K562 (cell line): ENCODE measurements at regions of chr9 and their contacts with region 1.

Region 1: GRCh38 chr9:128275996-128276573 is at the starts of genes GOLGA2 and SWI5:
- DNase-seq: peak; percentile 100
- ATAC-seq: peak; percentile 95
- H3K4me3 ChIP-seq: peak within 1 kb of the TSS; percentile 85
- H3K27ac ChIP-seq: peak within 1 kb of the TSS; percentile 90
- H3K4me1 ChIP-seq: peaks cover 40 to 53% of the 10 kb centered on the region in 2 experiments
- H3K27me3 ChIP-seq: no peaks in the 10 kb centered on the region
- CTCF ChIP-seq: no peak; a peak in 1 of 6 replicates
- EP300 ChIP-seq: 0 out of 2 replicates have a peak, but pooled peaks have one; percentile 6
- POLR2A ChIP-seq: no peak
- RAD21 ChIP-seq: no peak; a peak in 1 of 4 replicates
- polyA plus RNA-seq, gene GOLGA2: 15.7 to 21.9 TPM
- polyA plus RNA-seq, gene SWI5: 62.8 to 133 TPM

Region 2: DNA sequence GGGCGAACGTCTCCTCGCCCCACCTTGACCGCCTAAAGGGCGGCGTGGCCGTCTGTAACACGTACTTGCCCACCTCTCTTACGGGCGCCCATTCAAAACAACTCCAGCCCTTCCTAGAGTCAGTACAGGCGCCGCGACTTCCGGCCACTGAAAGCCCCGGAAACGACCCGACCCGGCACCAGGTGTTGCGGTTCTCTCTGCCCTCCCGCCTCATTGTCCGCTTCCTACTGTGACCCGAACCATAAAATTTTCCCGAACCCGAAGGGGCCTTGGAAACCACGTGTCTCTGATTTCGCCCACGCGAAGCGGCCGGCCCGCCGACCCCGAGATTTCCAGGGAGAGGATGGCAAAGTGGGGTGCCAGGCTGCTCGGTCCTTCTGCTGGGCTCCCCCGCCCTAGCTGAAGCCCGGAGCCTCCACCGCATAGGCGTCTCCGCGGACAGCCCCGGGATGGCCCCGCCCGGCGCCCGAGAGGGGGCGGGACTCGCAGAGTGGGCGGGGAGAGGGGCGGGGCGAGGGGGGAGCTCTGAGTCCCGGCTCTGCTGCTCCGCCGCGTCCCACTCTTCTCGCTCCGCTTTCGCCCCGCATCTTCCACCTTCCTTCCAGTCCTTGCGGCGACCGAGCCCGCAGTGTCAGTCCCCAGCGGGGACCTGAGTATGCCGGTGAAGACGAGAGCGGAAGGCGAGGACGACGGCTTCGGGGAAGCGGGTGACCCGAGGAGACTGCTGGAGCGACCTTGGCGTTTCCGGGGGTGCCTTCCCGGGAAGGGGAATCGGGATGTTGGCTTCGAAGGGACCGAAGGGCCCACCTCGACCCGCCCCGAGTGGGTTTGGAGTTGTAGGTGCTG is 147.9 kb before region 1 on chr9:
- CTCF ChIA-PET with region 1: no interaction called
- POLR2A ChIA-PET with region 1: no interaction called
- in situ Hi-C with region 1: no loop called
- intact Hi-C with region 1: loop called (anchors 10 kb)
- DNase-seq: peak; percentile 89 to 93 (median 90)
- ATAC-seq: peak; percentile 82
- H3K4me3 ChIP-seq: peak overlapping the region; percentile 98
- H3K27ac ChIP-seq: peak overlapping the region; percentile 93
- H3K4me1 ChIP-seq: peaks cover 10 to 38% of the 10 kb centered on the region in 2 experiments
- H3K27me3 ChIP-seq: no peaks in the 10 kb centered on the region
- CTCF ChIP-seq: no peak
- EP300 ChIP-seq: no peak
- POLR2A ChIP-seq: peak; percentile 71; the same call in 1 of the 2 replicates
- RAD21 ChIP-seq: no peak

Region 3: DNA sequence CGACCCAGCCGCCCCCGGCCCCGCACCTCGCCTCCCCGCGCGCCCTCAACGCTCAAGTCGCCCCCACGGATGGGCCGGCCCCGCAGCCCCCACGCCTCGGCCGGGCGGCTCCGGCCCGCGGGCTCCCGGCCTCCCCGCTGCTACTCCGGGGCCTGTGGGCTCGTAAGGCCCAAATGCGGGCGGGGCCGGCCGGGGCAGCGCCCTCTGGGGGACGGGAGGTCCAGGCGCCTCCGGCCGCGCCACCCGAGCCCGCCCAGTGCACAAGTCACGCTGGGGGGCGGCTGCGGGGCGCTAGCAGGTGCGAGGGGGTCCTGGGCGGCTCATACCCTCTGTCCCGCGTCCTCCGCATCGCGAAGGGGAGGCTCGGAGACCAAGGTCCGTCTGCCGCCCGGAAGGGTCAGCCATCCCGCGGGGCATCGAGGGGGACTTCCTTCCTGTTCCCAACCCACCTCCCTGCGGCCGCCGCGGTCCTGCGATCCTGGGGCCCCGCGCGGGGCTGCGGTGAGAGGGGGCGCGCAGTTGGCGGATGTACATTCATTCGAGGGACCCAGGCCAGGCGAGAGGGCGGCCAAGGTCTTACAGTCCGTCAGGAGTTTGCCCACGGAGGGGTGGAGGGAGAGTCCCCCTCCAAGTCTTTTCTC is 84.6 kb before region 1 on chr9 and contains the start of gene CIZ1:
- CTCF ChIA-PET with region 1: interaction called, 4 read pairs
- POLR2A ChIA-PET with region 1: interaction called, 3 read pairs
- in situ Hi-C with region 1: no loop called
- intact Hi-C with region 1: loop called (anchors 5 kb)
- DNase-seq: peak; percentile 96 to 99 (median 99)
- ATAC-seq: peak; percentile 96
- H3K4me3 ChIP-seq: peak within 1 kb of the TSS; percentile 92
- H3K27ac ChIP-seq: peak within 1 kb of the TSS; percentile 82
- H3K4me1 ChIP-seq: peaks cover 26 to 34% of the 10 kb centered on the region in 2 experiments
- H3K27me3 ChIP-seq: no peaks in the 10 kb centered on the region
- CTCF ChIP-seq: peak; percentile 87 to 97 (median 95)
- EP300 ChIP-seq: peak; percentile 59
- POLR2A ChIP-seq: no peak
- RAD21 ChIP-seq: peak; percentile 35 to 43
- polyA plus RNA-seq, gene CIZ1: 6.6 to 12.6 TPM

Region 4: DNA sequence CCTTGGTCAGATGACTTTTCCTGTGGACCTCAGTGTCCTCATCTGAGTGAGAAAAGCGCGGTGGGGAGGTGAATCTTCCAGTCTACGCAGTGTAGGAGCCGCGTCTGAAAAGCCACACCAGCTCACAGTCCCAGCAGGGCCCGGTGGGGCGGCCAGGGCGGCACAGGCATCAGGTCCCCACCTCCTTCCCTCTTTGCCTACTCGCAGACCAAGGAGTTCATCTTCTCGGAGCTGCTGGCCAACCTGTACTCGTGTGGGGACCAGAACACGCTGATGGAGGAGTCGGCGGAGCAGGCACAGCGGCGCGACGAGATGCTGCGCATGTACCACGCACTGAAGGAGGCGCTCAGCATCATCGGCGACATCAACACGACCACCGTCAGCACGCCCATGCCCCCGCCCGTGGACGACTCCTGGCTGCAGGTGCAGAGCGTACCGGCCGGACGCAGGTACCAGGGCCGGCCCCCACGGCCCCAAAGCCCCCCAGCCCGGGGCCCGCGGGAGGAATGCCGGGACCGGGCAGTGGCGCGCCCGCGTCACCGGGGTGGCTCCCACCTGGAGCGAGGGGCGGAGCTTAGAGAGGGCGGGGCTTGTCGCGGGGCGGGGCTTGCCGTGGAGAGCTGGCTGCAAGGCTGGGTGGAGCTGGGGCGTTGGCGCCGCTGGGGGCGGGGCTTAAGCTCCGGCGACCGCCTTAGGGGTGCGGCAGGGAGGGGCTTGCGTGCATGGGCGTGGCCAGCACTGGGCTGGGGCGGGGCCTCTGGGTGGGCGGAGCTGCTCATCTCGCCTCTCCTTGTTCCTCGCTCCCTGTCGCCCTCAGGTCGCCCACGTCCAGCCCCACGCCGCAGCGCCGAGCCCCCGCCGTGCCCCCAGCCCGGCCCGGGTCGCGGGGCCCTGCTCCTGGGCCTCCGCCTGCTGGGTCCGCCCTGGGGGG is 25.9 kb before region 1 on chr9:
- CTCF ChIA-PET with region 1: no interaction called
- POLR2A ChIA-PET with region 1: interaction called, 37 read pairs
- in situ Hi-C with region 1: no loop called
- intact Hi-C with region 1: loop called (anchors 2 kb)
- DNase-seq: peak; percentile 100
- ATAC-seq: peak; percentile 88
- H3K4me3 ChIP-seq: peak overlapping the region; percentile 72
- H3K27ac ChIP-seq: peak overlapping the region; percentile 61
- H3K4me1 ChIP-seq: peaks cover 61 to 73% of the 10 kb centered on the region in 2 experiments
- H3K27me3 ChIP-seq: no peaks in the 10 kb centered on the region
- CTCF ChIP-seq: no peak; a peak in 1 of 6 replicates
- EP300 ChIP-seq: no peak
- POLR2A ChIP-seq: peak; percentile 17; the same call in 1 of the 2 replicates
- RAD21 ChIP-seq: peak in 1 of 2 experiments; percentile 15; a peak in 1 of 4 replicates

Region 5: DNA sequence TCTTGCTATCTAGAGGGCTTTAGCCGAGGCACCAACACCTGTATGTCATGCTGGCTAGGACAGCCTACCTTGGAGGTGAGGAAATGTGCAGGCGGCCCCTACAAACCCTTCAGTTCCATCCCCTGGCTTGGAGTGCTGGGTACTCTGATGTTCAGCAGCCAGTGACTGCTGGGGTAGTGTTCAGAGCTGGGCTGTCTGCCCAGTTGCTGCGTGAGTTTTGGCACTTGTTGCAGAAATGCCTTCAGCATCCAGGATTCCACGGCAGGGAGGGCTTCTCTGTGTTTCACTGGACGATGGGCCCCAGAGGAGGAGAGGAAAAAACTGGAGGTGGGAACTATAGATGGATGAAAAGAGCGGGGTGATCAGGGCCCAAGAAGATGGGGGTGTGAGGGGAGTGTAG is 10.4 kb after region 1 on chr9:
- CTCF ChIA-PET with region 1: no interaction called
- POLR2A ChIA-PET with region 1: interaction called, 35 read pairs
- in situ Hi-C with region 1: no loop called
- intact Hi-C with region 1: no loop called
- DNase-seq: no peak
- ATAC-seq: no peak
- H3K4me3 ChIP-seq: no peak overlapping the region
- H3K27ac ChIP-seq: no peak overlapping the region
- H3K4me1 ChIP-seq: peaks cover 0 to 5% of the 10 kb centered on the region in 2 experiments; a peak in 1 of 5 replicates
- H3K27me3 ChIP-seq: no peaks in the 10 kb centered on the region
- CTCF ChIP-seq: no peak
- EP300 ChIP-seq: no peak
- POLR2A ChIP-seq: no peak
- RAD21 ChIP-seq: no peak

Region 6: GRCh38 chr9:128688512-128689292 is 412.6 kb after region 1 on chr9 and contains the start of gene SET:
- CTCF ChIA-PET with region 1: no interaction called
- POLR2A ChIA-PET with region 1: no interaction called
- in situ Hi-C with region 1: no loop called
- intact Hi-C with region 1: loop called (anchors 10 kb)
- DNase-seq: peak; percentile 99 to 100 (median 99)
- ATAC-seq: peak; percentile 95
- H3K4me3 ChIP-seq: peak within 1 kb of the TSS; percentile 71
- H3K27ac ChIP-seq: peak within 1 kb of the TSS; percentile 89
- H3K4me1 ChIP-seq: peaks cover 27 to 36% of the 10 kb centered on the region in 2 experiments
- H3K27me3 ChIP-seq: no peaks in the 10 kb centered on the region
- CTCF ChIP-seq: no peak; a peak in 1 of 6 replicates
- EP300 ChIP-seq: 0 out of 2 replicates have a peak, but pooled peaks have one; percentile 42
- POLR2A ChIP-seq: peak; percentile 79
- RAD21 ChIP-seq: peak; percentile 16 to 24; a peak in 2 of 4 replicates
- polyA plus RNA-seq, gene SET: 404 to 534 TPM

Region 7: DNA sequence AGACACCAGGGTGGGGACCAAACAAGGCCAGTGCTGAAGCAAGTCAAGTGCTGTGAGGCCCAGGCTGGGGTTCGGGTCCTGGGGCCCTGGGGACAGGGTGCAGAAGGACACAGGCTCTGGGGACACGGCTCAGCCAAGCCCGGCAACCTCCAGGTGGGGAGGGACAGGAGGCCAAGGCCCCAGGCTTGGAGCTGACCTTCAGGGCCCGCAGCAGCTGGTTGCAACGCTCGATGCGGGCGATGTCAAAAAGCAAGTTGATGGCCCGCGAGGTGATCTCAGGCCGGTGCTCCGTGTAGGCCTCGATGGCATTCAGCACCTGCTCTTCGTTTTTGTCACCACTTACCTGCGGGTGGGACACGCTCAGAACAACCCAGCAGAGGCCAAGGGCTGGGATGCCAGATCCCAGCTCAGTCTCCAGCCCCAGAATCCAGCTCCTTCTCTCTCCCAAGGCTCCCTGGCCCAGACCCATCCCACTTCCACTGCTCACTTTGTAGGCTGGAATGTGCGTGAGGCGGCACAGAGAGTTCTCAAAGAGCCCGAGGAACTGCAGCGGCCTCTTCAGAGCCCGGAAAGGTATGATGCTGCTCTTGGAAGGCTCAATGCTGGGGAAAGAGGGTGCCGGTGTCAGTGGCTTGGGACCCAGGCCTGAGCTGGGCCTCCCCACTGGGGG is 475.0 kb after region 1 on chr9:
- CTCF ChIA-PET with region 1: no interaction called
- POLR2A ChIA-PET with region 1: no interaction called
- in situ Hi-C with region 1: no loop called
- intact Hi-C with region 1: no loop called
- DNase-seq: no peak
- ATAC-seq: no peak
- H3K4me3 ChIP-seq: no peak overlapping the region
- H3K27ac ChIP-seq: no peak overlapping the region
- H3K4me1 ChIP-seq: peaks cover 0 to 10% of the 10 kb centered on the region in 2 experiments; a peak in 1 of 5 replicates
- H3K27me3 ChIP-seq: no peaks in the 10 kb centered on the region
- CTCF ChIP-seq: no peak
- EP300 ChIP-seq: no peak
- POLR2A ChIP-seq: no peak
- RAD21 ChIP-seq: no peak